Activated CD4-positive, alpha-beta T cell treated with anti-CD3 and anti-CD28 coated beads, Interleukin-2, amount 10 ng/mL, durations not matched to agents 24 days and 14 days (primary cell): ENCODE measurements at regions of chr5 and their contacts with region 1.

Region 1: DNA sequence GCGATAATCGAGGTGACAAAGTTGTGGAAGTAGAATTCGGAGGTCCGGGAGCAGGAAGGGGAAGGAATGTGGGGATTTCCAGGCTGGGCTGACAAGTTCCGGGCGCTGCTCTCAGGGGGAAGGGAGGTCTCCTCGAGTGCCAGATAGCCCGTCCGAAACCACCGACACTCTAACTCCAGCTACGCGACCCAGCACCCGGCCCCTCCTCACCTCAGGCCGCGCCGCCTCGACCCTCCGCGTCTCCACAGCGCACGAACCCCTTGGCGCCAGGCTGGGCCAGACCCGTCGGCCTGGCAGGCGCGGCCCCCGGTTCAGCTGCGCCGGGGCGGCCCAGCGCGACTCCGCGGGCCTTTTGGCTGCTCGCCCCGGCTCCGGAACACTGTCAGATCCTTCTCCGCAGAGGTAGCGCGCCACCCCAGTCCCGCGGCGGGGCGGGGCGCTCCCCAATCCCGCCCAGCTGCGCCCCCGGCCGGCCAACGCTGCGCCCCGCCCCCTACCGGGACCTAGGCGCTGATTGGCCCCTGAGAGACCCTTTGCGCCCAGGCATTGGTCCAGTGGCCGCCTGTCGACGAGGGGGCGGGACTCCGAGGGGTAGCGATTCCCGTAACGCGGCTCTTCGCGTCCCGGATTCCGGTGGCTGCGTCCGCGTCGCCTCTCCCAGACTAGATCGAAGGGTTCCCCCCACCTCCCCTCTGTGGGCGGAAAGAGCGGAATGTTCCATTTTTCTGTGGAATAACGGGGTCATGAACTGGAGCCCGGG is at the start of gene IL6ST:
- DNase-seq: peak; percentile 99
- H3K4me3 Mint-ChIP-seq: peak within 1 kb of the TSS; percentile 93
- H3K27ac Mint-ChIP-seq: peak within 1 kb of the TSS; percentile 94
- H3K4me1 Mint-ChIP-seq: peaks cover 52% of the 10 kb centered on the region
- H3K27me3 Mint-ChIP-seq: no peaks in the 10 kb centered on the region
- total RNA-seq, gene IL6ST: 65.1 and 68.2 TPM in 2 replicates

Region 2: DNA sequence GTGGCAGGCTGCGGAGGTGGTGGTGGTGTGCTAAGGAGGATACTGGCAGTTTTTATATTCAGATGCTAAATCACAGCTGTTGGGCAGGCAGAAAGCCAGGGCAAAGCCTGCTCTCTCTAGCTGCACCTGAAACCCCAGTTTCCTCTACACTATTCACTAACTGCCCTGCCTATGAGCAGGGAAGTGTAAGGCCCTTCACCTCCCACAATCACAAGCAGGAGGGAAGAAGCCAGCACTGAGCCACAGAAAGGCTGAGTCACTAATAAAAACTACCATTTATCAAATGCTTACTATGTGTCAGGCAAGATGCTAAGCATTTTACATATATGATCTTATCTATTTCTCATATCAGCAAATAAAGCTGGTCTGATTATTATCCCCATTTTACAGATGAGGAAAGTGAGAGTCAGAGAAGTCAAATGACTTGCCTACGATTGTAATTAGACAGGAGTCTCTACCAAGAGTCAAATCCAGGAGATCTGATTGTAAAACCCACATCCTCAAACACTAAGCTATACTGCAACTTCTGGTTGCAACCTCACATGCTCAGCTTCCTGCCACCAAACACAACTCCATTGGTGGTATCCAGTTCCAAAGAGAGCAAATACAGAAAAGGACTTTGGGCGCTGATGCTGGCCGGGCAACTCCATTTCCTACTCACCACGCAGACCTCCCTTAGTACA is 17.7 kb after region 1 on chr5:
- intact Hi-C with region 1: loop called (anchors 1 kb)
- DNase-seq: peak; percentile 84
- H3K4me3 Mint-ChIP-seq: peak overlapping the region; percentile 47
- H3K27ac Mint-ChIP-seq: peak overlapping the region; percentile 47
- H3K4me1 Mint-ChIP-seq: peaks cover 28% of the 10 kb centered on the region
- H3K27me3 Mint-ChIP-seq: no peaks in the 10 kb centered on the region

Region 3: GRCh38 chr5:56056875-56057274 is 62.1 kb after region 1 on chr5:
- intact Hi-C with region 1: loop called (anchors 1 kb)
- DNase-seq: no peak
- H3K4me3 Mint-ChIP-seq: no peak overlapping the region
- H3K27ac Mint-ChIP-seq: peak overlapping the region; percentile 46
- H3K4me1 Mint-ChIP-seq: peaks cover 51% of the 10 kb centered on the region
- H3K27me3 Mint-ChIP-seq: peaks cover 4% of the 10 kb centered on the region

Region 4: GRCh38 chr5:56080375-56081052 is 85.8 kb after region 1 on chr5:
- intact Hi-C with region 1: no loop called
- DNase-seq: peak; percentile 71
- H3K4me3 Mint-ChIP-seq: no peak overlapping the region
- H3K27ac Mint-ChIP-seq: peak overlapping the region; percentile 65
- H3K4me1 Mint-ChIP-seq: peaks cover 28% of the 10 kb centered on the region
- H3K27me3 Mint-ChIP-seq: peaks cover 2% of the 10 kb centered on the region

Region 5: DNA sequence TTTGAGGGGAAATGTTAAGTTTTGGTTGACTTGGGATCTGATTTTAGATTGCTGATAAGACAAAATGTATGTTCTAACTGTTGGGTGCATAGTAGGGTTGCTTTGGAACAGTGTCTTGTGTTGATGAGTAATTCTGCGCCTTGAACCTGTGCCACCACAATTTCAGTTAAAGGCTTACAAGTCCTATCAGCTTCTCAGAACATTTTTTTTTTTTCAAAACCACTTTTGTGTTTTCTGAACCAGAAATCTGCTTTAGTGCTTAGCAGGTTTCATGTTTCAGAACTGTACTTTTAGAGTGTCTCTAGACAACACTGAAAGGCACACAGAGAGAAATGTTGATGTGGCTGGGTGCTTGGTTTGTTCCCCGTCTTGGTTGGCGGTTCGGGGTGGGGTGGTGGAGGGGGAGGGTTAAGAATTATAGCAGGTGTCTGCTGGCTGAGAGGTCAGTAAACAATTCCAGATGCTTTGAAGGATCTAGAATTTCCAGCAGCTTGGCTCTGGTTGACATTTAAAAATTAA is 153.8 kb after region 1 on chr5:
- intact Hi-C with region 1: loop called (anchors 1 kb)
- DNase-seq: peak; percentile 88
- H3K4me3 Mint-ChIP-seq: peak overlapping the region; percentile 21
- H3K27ac Mint-ChIP-seq: peak overlapping the region; percentile 83
- H3K4me1 Mint-ChIP-seq: peaks cover 38% of the 10 kb centered on the region
- H3K27me3 Mint-ChIP-seq: no peaks in the 10 kb centered on the region

Region 6: DNA sequence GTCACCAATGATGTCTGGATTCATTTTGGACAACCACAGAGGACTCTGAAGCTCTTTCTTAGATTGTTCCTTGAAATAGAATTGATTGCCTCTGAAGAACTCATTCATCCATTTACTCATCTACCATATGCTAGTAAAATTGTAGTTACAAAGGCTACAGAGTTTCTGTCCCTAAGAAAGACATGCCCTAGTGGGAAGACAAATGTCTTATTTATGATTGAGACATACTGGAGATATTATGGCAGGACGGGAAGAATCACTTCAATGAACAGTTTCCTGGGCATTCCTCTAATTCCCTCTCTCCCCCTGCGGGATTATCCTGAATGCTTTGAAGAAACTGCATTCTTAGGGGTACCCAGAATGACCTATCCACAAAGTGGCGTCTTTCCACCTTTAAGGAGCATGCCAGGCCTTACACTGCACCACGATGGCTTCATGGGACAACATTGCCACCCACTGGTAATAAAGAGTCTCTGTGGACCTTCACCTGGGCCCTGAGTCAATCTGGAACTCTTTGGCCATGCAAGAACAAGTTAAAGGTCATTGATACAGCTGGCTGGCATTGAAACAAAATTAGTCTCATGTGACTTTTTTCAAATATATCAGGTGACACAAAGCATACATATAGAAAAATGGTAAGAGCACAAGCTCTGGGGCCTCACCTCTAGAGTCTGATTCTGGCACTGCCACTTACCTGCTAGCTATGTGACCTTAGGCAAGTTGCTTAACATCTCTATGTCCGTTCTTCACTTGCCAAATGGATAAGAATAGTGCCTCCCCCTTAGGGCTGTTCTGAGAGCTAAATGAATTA is 206.3 kb after region 1 on chr5:
- intact Hi-C with region 1: loop called (anchors 1 kb)
- DNase-seq: peak; percentile 89
- H3K4me3 Mint-ChIP-seq: no peak overlapping the region
- H3K27ac Mint-ChIP-seq: no peak overlapping the region
- H3K4me1 Mint-ChIP-seq: peaks cover 23% of the 10 kb centered on the region
- H3K27me3 Mint-ChIP-seq: no peaks in the 10 kb centered on the region